Aorta (tissue), 5 donors: ENCODE measurements at regions of chr19 and their contacts with region 1.

Region 1: DNA sequence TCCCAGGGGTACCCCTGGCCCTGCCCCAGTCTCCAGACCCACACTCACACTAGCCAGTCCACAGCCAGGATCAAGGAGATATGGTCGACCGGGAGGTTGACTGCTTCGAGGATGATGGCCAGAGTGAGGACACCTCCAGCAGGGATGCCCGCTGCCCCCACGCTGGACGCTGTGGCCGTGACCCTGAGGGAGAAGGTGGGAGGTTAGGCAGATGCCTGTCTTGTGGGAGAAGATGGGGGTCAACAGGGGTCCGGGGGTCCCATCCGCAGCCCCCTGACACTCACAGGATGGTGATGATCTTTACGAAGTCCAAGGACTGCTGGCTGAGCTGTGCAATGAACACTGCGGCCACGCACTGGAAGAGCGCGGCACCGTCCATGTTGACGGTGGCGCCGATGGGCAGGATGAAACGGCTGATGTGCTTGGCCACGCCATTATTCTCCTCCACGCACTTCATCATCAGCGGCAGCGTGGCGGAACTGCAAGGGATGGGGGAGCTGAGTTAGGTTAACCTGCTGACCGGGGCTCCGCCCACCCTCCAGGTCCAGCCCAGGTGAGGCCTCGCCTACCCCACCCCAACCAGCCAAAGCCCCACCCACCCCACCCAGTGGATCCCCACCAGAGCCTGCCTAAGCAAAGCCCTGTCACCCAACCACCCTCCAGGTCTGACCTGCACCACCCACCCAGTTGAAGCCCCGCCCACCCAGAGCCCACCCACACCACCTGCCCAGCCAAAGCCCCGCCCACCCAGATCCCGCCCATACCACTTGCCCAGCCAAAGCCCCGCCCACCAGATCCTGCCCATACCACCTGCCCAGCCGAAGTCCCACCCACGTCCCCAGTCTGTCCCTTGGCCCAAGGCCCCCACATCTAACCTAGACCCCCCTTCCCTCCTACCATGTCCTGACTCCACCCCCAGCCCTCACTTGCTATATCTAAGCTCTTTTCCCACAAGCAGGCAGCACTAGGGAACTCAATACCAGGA is 11.2 kb downstream of the SLC1A5 start:
- DNase-seq: no peak
- ATAC-seq: no peak
- H3K4me3 ChIP-seq: no peak overlapping the region
- H3K27ac ChIP-seq: no peak overlapping the region
- H3K4me1 ChIP-seq: no peaks in the 10 kb centered on the region
- H3K27me3 ChIP-seq: no peaks in the 10 kb centered on the region

Region 2: DNA sequence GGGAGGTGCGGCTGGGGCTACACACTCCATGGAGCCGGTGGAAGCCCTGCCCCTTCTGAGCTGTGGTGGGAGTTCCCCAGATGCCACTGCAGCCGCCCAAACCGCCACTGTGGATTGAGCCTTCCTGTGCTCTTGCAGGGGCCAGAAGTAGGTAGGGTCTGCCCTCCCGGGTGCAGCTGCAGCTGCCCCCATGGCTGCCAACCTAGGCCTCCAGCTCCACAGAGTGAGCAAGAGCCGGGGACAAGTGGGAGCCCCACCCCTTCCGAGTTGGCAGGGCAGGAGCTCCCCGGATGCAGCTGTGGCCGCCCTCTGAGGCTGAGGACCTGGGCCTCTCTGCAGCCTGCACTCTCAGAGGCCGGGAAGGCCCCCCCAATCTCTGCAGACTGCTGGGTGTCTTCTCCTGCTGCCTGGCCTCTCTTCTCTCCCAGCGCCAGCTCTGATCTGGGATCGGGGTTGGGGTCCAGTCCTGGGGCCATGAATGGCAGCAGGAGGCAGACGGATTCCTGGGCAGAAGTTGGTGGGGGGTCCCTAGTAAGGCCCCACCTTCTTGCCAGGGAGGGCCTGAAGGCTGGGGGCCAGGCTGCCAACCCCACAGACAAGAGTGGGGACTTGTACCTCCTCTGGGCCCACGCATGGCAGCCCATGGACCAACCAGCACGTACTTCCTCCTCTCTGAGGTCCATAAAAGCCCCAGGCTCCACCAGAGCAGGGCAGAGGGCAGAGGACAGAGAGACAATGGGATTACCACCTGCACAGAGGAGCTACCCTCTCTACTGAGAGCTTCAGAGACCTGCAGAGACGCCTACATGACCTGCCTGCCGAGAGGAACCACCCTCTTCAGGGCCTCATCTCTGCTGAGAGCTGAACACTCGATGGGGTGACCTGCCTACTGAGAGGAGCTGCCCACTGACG is 44.5 kb after region 1 on chr19:
- intact Hi-C with region 1: loop called in 1 of 2 experiments (anchors 5 kb)
- DNase-seq: peak in 1 of 2 donors; percentile 55
- ATAC-seq: peak; percentile 11
- H3K4me3 ChIP-seq: no peak overlapping the region
- H3K27ac ChIP-seq: no peak overlapping the region
- H3K4me1 ChIP-seq: no peaks in the 10 kb centered on the region
- H3K27me3 ChIP-seq: no peaks in the 10 kb centered on the region